ENCODE measurements at regions of chr1 and their contacts with region 1.

Region 1: DNA sequence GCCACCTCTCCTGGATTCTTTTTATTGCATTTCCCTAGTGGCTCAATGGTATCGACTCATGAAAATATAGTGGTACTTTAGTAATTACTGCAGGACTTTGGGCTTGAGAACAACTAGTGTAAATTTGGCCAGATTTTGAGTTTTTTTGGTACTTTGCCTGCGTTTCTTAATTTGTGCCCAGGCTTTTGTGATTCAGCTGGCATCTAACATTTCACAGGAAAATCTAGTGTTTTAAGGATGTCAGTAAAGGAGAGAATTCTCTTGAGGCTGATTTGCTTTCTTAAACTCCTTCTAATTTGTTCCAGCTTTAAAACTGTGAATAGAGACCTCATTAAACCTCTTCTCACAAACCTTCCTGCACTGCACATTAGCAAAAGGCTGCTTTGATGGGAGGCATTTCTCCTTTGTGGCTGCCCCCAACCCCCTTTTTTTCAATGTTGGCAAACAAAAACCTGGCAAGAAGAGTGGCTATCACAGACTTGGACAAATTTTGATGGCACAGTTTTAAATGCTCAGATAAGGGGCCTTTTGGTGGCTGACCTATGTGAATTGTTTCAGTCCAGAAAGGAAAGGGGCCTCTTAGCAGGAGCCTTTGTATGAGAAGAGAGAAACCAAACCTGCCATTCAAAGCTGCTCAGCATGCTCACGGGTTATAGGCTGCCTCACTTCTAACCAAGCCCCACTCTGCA is 113.4 kb upstream of the RAVER2 start:
- DNase-seq: no peak
- ATAC-seq: no peak
- H3K4me3 Mint-ChIP-seq: no peak overlapping the region
- H3K27ac Mint-ChIP-seq: no peak overlapping the region
- H3K4me1 Mint-ChIP-seq: peaks cover 17% of the 10 kb centered on the region
- H3K27me3 Mint-ChIP-seq: peaks cover 10% of the 10 kb centered on the region
- CTCF ChIP-seq: no peak

Region 2: DNA sequence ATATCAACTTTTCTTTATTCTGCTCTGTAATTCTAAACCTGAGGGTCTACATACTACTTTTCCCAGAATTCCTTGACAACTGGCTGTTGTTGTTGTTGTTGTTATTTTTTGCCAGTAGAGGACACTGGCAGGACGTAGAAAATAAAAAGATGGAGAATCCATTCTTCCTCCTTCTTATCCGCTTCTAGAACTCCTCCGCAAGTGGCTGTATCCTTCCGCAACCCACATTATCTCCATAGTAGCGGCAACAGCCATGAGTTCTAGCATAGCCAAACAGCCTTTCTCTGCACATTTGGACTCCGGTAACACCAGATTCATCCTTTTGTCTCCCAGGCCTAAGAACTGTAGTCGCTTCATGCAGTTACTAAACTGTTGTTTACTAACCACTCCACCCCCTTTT is 252.7 kb before region 1 on chr1:
- CTCF ChIA-PET with region 1: no interaction called
- POLR2A ChIA-PET with region 1: no interaction called
- intact Hi-C with region 1: no loop called
- DNase-seq: no peak
- ATAC-seq: no peak
- H3K4me3 Mint-ChIP-seq: no peak overlapping the region
- H3K27ac Mint-ChIP-seq: no peak overlapping the region
- H3K4me1 Mint-ChIP-seq: no peaks in the 10 kb centered on the region
- H3K27me3 Mint-ChIP-seq: peaks cover 5% of the 10 kb centered on the region
- CTCF ChIP-seq: no peak

Region 3: GRCh38 chr1:64497088-64497883 is 134.2 kb before region 1 on chr1:
- CTCF ChIA-PET with region 1: no interaction called
- POLR2A ChIA-PET with region 1: interaction called, 13 read pairs
- intact Hi-C with region 1: no loop called
- DNase-seq: no peak
- ATAC-seq: no peak
- H3K4me3 Mint-ChIP-seq: no peak overlapping the region
- H3K27ac Mint-ChIP-seq: no peak overlapping the region
- H3K4me1 Mint-ChIP-seq: no peaks in the 10 kb centered on the region
- H3K27me3 Mint-ChIP-seq: peaks cover 16% of the 10 kb centered on the region
- CTCF ChIP-seq: no peak

Measured in activated B cell treated with CpG ODN at 0.5 μM for 24 hours (primary cell).